Left lung (tissue), 14 donors: ENCODE measurements at regions of chr17 and their contacts with region 1.

Region 1: DNA sequence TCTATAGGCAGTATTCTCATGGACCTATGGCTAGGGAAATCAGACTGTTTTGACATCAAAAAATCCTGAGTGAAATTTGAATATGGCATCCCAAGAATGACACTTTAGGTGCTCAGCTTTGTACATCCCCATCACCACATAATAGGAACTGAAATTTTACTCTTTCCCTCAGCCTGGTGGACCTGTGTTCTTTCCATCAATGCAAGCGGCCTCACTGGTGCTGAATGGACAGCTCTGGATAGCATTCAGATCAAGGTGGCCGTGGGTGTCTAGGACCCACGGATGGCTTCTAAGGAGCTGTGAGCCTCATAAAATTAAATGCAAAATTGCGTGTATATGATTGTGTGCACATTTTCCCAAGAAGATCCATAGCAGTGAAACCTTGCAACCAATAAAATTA is 152.6 kb downstream of the MAP2K6 start:
- DNase-seq: no peak
- ATAC-seq: no peak
- H3K4me3 ChIP-seq: no peak overlapping the region
- H3K27ac ChIP-seq: no peak overlapping the region
- H3K4me1 ChIP-seq: no peaks in the 10 kb centered on the region
- H3K27me3 ChIP-seq: no peaks in the 10 kb centered on the region
- CTCF ChIP-seq: no peak

Region 2: GRCh38 chr17:69501591-69502468 is 65.3 kb before region 1 on chr17:
- intact Hi-C with region 1: no loop called
- DNase-seq: peak in 3 of 4 donors; percentile 38 to 77 (median 71)
- ATAC-seq: peak; percentile 79
- H3K4me3 ChIP-seq: peak overlapping the region; percentile 5 to 24
- H3K27ac ChIP-seq: peak overlapping the region; percentile 8 to 77
- H3K4me1 ChIP-seq: peaks cover 20 to 35% of the 10 kb centered on the region in 2 donors
- H3K27me3 ChIP-seq: no peaks in the 10 kb centered on the region
- CTCF ChIP-seq: no peak

Region 3: GRCh38 chr17:70552230-70552981 is 985.3 kb after region 1 on chr17:
- intact Hi-C with region 1: loop called in 1 of 2 experiments (anchors 5 kb)
- DNase-seq: peak in 2 of 4 donors; percentile 50 to 61
- ATAC-seq: peak; percentile 88
- H3K4me3 ChIP-seq: no peak overlapping the region
- H3K27ac ChIP-seq: no peak overlapping the region
- H3K4me1 ChIP-seq: no peaks in the 10 kb centered on the region
- H3K27me3 ChIP-seq: no peaks in the 10 kb centered on the region
- CTCF ChIP-seq: peak; percentile 28 to 49